Activated CD8-positive, alpha-beta T cell treated with anti-CD3 and anti-CD28 coated beads, Interleukin-2, amount 10 ng/mL, durations not matched to agents 7 days and 5 days (primary cell): ENCODE measurements at regions of chr10 and their contacts with region 1.

Region 1: GRCh38 chr10:109978481-109978880 is 29.3 kb upstream of the ADD3 start:
- DNase-seq: peak; percentile 73
- ATAC-seq: peak; percentile 36
- H3K4me3 Mint-ChIP-seq: no peak overlapping the region
- H3K27ac Mint-ChIP-seq: no peak overlapping the region
- H3K4me1 Mint-ChIP-seq: no peaks in the 10 kb centered on the region
- H3K27me3 Mint-ChIP-seq: peaks cover 3% of the 10 kb centered on the region

Region 2: GRCh38 chr10:109633846-109634245 is 344.6 kb before region 1 on chr10:
- CTCF ChIA-PET with region 1: no interaction called
- POLR2A ChIA-PET with region 1: no interaction called
- DNase-seq: no peak
- ATAC-seq: no peak
- H3K4me3 Mint-ChIP-seq: no peak overlapping the region
- H3K27ac Mint-ChIP-seq: no peak overlapping the region
- H3K4me1 Mint-ChIP-seq: no peaks in the 10 kb centered on the region
- H3K27me3 Mint-ChIP-seq: no peaks in the 10 kb centered on the region

Region 3: GRCh38 chr10:109953766-109954165 is 24.7 kb before region 1 on chr10:
- CTCF ChIA-PET with region 1: interaction called, 12 read pairs
- POLR2A ChIA-PET with region 1: no interaction called
- DNase-seq: no peak
- ATAC-seq: no peak
- H3K4me3 Mint-ChIP-seq: no peak overlapping the region
- H3K27ac Mint-ChIP-seq: no peak overlapping the region
- H3K4me1 Mint-ChIP-seq: peaks cover 3% of the 10 kb centered on the region
- H3K27me3 Mint-ChIP-seq: no peaks in the 10 kb centered on the region

Region 4: DNA sequence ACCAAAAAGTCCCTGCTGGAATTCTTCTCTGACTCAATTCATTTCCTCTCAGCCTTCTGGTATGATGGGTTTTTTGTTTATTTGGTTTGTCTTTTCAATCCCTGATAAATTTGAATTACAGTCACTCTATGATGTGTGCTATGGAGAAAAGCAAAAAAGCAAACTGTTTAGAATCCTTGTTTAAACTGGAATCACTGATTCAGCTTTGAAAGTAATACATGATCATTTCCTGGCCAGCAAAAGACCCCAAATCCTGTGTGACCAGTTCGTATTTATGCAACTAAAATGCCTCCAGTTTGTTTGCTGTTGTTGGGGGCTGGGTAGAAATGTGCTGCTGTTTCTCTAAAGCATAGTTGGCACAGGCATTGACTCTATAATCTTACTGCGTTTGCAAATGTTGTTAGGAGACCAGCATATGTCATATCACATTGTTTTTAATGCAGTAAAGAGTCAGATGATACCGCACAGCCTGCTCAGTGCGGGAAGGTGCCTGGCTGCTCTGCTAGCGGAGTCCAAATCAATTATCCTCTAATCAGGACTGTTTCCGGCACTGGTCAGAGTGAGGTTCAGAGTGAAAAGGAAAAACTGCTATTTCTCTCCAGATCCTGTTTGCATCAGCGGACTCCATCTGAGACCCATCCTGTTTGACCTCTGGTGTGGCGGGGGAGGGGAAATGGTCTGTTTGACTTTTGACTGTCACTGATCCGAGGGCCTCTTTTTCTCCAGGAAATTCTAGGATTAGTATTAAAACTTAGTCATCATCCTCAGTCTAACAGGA is 11.3 kb before region 1 on chr10:
- CTCF ChIA-PET with region 1: interaction called, 14 read pairs
- POLR2A ChIA-PET with region 1: no interaction called
- DNase-seq: no peak
- ATAC-seq: no peak
- H3K4me3 Mint-ChIP-seq: no peak overlapping the region
- H3K27ac Mint-ChIP-seq: no peak overlapping the region
- H3K4me1 Mint-ChIP-seq: no peaks in the 10 kb centered on the region
- H3K27me3 Mint-ChIP-seq: peaks cover 2% of the 10 kb centered on the region

Region 5: GRCh38 chr10:110007701-110008517 is 29.4 kb after region 1 on chr10 and contains the start of gene ADD3:
- CTCF ChIA-PET with region 1: interaction called, 25 read pairs
- POLR2A ChIA-PET with region 1: no interaction called
- DNase-seq: peak; percentile 95
- ATAC-seq: peak; percentile 76
- H3K4me3 Mint-ChIP-seq: no peak within 1 kb of the TSS
- H3K27ac Mint-ChIP-seq: peak within 1 kb of the TSS; percentile 94
- H3K4me1 Mint-ChIP-seq: peaks cover 37% of the 10 kb centered on the region
- H3K27me3 Mint-ChIP-seq: no peaks in the 10 kb centered on the region
- total RNA-seq, gene ADD3: 172 to 200 TPM

Region 6: DNA sequence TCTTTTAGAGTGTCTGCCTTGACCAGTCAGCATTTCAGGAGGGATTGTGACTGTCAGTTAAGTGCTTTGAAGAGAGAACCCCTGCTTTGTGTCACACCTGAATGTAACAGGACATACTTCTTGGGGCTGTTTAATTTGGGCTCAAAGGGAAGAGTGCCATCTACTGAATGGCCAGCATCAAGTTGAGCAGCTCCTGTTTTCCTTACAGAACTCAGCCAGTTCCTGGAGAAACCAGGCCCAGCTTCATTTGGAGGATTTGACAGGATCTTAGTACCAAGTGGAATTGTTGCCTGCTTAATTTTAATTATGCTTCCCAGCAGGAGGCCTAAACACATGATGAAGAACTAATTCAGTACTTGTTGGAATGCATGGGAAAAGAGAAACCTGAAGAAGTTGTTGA is 37.6 kb after region 1 on chr10:
- CTCF ChIA-PET with region 1: interaction called, 10 read pairs
- POLR2A ChIA-PET with region 1: no interaction called
- DNase-seq: no peak
- ATAC-seq: no peak
- H3K4me3 Mint-ChIP-seq: no peak overlapping the region
- H3K27ac Mint-ChIP-seq: no peak overlapping the region
- H3K4me1 Mint-ChIP-seq: peaks cover 55% of the 10 kb centered on the region
- H3K27me3 Mint-ChIP-seq: no peaks in the 10 kb centered on the region

Region 7: DNA sequence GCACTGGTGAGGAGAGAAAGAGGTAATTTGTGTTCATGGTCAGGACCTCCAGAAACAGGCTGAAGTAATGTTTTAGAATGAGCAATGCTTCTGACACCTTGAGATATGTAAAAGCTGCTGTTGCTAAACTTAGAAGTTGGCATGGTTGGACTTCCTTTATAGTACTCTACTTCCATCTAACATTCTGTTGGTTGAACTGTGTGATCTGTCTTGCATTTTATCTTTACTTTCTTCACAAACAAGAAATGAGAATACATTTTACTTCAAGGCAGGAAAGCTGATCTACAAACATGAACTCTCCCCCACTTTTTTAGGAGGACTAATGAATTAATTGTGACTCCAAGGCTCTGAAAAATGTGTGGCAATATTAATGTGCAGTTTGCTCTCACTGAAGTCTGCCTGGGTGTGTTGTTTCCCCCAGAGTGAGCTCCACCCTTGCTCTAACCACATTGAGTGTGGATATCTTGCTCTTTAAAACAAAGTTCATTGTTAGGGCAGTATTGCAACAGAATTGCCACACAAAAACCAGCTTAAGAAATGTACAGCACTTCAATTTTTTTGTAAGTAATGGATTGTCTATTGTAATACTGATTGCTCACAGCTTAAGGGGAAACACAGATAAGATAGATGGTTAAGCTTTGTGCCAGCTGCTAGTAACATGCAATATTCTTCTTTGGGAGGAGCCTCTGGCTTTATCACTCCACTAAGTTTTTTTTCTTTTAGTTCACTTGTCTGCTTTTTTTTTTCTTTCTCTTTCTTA is 98.3 kb after region 1 on chr10:
- CTCF ChIA-PET with region 1: interaction called, 11 read pairs
- POLR2A ChIA-PET with region 1: no interaction called
- DNase-seq: peak; percentile 63
- ATAC-seq: peak; percentile 79
- H3K4me3 Mint-ChIP-seq: peak overlapping the region; percentile 84
- H3K27ac Mint-ChIP-seq: peak overlapping the region; percentile 96
- H3K4me1 Mint-ChIP-seq: peaks cover 83% of the 10 kb centered on the region
- H3K27me3 Mint-ChIP-seq: no peaks in the 10 kb centered on the region